Activated CD4-positive, alpha-beta memory T cell treated with anti-CD3 and anti-CD28 coated beads for 36 hours (primary cell): ENCODE measurements at regions of chr1 and their contacts with region 1.

Region 1: DNA sequence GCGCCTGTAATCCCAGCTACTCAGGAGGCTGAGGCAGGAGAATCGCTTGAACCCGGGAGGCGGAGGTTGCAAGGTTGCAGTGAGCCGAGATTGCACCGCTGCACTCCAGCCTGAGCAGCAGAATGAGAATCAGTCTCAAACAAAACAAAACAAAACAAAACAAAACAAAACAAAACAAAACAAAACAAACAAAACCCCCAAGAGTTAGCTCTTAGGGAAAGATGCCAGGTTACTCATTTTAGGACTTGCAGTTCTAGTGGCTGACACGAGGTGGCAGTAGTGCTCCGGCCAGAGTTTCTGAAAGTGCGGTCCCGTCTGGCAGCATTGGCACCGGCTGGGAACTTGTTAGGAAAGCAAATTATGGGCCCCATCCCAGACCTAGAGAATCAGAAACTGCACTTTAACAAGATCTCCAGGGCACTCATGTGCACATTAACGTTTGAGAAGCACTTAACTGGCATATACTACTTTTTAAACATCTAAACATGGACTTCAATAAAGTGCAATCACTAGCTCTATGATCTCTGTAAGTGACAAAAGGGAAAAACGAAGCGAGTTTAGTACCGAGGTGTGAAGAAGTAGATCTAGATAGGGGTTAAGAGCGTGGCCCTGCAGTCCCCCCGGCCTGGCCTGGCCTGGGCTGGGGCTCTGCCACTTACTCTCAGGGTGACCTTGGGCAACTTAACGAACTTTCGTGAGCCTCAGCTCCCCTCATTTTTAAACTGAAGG is 41.9 kb upstream of the TNFRSF1B start:
- DNase-seq: peak; percentile 86
- H3K4me3 Mint-ChIP-seq: no peak overlapping the region
- H3K27ac Mint-ChIP-seq: peak overlapping the region; percentile 42
- H3K4me1 Mint-ChIP-seq: peaks cover 52% of the 10 kb centered on the region
- H3K27me3 Mint-ChIP-seq: no peaks in the 10 kb centered on the region

Region 2: GRCh38 chr1:11571906-11572616 is 552.8 kb before region 1 on chr1:
- CTCF ChIA-PET with region 1: no interaction called
- POLR2A ChIA-PET with region 1: no interaction called
- intact Hi-C with region 1: no loop called
- DNase-seq: peak; percentile 35
- H3K4me3 Mint-ChIP-seq: no peak overlapping the region
- H3K27ac Mint-ChIP-seq: no peak overlapping the region
- H3K4me1 Mint-ChIP-seq: no peaks in the 10 kb centered on the region
- H3K27me3 Mint-ChIP-seq: peaks cover 17% of the 10 kb centered on the region

Region 3: DNA sequence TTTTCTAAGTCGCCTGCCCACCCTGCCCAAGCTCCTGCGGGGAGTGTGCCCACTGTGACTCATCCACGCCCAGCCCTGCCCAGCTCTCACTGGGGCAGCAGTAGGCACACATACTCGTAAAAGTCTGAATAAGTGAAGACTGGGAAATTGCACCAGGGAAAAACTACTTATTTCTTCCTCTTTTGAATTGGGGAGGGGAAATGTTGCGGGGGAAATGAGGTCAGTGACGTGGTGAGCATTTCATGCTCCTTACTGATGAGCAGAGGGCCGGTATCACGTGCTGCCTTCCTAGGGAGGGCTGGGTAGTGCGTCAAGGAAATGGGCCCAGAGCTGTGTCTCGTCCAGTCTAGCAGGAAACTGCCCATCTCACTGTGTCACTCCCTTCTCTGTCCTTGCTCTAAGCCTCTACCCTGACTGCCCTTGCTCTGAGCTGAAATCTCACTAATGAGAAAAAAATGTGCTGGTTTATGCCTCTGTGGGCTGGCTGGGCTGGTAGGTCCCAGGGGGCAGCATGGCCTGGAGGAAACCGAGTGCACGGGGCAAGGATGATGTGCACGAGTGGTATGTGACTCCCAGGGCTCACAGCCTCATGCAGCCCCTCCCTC is 28.4 kb after region 1 on chr1:
- CTCF ChIA-PET with region 1: interaction called, 23 read pairs
- POLR2A ChIA-PET with region 1: interaction called, 4 read pairs
- intact Hi-C with region 1: no loop called
- DNase-seq: peak; percentile 65
- H3K4me3 Mint-ChIP-seq: no peak overlapping the region
- H3K27ac Mint-ChIP-seq: peak overlapping the region; percentile 90
- H3K4me1 Mint-ChIP-seq: peaks cover 88% of the 10 kb centered on the region
- H3K27me3 Mint-ChIP-seq: no peaks in the 10 kb centered on the region

Region 4: GRCh38 chr1:12177999-12178441 is 53.2 kb after region 1 on chr1:
- CTCF ChIA-PET with region 1: interaction called, 168 read pairs
- POLR2A ChIA-PET with region 1: interaction called, 11 read pairs
- intact Hi-C with region 1: loop called (anchors 1 kb)
- DNase-seq: peak; percentile 97
- H3K4me3 Mint-ChIP-seq: peak overlapping the region; percentile 54
- H3K27ac Mint-ChIP-seq: peak overlapping the region; percentile 94
- H3K4me1 Mint-ChIP-seq: peaks cover 94% of the 10 kb centered on the region
- H3K27me3 Mint-ChIP-seq: no peaks in the 10 kb centered on the region

Region 5: DNA sequence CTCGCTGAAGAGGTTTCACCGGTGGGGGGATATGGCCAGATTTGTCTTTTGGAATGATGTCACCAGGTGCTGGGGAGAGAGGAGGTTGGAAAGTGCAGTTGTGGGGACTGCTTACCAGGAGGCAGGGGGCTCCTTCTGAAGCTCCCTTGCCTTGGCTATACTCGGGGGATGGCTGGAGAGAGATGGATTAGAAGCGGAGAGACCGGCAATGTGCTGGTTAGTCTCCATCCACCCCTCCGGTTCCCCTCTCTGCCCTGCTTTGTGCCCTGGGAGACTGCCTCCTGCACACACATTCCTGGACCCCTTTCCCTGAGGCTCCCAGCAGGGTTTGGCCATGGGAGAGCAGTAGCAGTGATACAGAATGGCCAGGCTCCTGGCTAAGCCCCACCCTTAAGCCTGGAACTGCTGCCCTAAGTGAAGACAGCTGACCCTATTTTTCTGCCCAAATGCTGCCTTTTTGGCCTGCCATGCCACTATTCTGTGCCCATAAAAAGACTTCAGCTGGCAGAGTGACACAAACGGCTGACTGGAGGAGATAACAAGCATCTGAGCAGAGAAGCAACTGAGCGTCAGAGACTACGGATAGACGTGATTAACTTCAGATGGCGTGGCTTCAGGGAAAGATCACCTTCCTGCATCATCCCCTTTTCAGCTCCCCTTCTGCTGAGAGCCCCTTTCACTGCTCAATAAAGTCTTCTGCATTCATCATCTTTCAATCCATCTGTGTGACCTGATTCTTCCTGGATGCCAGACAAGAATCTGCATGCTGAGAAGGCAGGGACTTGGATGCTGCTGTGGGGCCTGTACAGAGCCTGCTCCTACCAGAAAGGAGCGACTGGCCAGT is 90.5 kb after region 1 on chr1:
- CTCF ChIA-PET with region 1: interaction called, 369 read pairs
- POLR2A ChIA-PET with region 1: interaction called, 3 read pairs
- intact Hi-C with region 1: no loop called
- DNase-seq: no peak
- H3K4me3 Mint-ChIP-seq: no peak overlapping the region
- H3K27ac Mint-ChIP-seq: no peak overlapping the region
- H3K4me1 Mint-ChIP-seq: peaks cover 7% of the 10 kb centered on the region
- H3K27me3 Mint-ChIP-seq: no peaks in the 10 kb centered on the region

Region 6: GRCh38 chr1:12255918-12256317 is 131.1 kb after region 1 on chr1:
- CTCF ChIA-PET with region 1: interaction called, 12 read pairs
- POLR2A ChIA-PET with region 1: no interaction called
- intact Hi-C with region 1: no loop called
- DNase-seq: no peak
- H3K4me3 Mint-ChIP-seq: no peak overlapping the region
- H3K27ac Mint-ChIP-seq: no peak overlapping the region
- H3K4me1 Mint-ChIP-seq: no peaks in the 10 kb centered on the region
- H3K27me3 Mint-ChIP-seq: no peaks in the 10 kb centered on the region